Head of caudate nucleus (tissue), 42 donors: ENCODE measurements at regions of chr17 and their contacts with region 1.

Region 1: GRCh38 chr17:76408052-76408849 is 23.8 kb downstream of the SPHK1 start:
- DNase-seq: peak in 38 of 42 donors; percentile 29 to 83 (median 66)

Region 2: GRCh38 chr17:76452660-76453430 is 44.6 kb after region 1 on chr17 and contains the start of gene UBE2O:
- intact Hi-C with region 1: loop called (anchors 10 kb)
- DNase-seq: peak; percentile 68 to 96 (median 92)

Region 3: DNA sequence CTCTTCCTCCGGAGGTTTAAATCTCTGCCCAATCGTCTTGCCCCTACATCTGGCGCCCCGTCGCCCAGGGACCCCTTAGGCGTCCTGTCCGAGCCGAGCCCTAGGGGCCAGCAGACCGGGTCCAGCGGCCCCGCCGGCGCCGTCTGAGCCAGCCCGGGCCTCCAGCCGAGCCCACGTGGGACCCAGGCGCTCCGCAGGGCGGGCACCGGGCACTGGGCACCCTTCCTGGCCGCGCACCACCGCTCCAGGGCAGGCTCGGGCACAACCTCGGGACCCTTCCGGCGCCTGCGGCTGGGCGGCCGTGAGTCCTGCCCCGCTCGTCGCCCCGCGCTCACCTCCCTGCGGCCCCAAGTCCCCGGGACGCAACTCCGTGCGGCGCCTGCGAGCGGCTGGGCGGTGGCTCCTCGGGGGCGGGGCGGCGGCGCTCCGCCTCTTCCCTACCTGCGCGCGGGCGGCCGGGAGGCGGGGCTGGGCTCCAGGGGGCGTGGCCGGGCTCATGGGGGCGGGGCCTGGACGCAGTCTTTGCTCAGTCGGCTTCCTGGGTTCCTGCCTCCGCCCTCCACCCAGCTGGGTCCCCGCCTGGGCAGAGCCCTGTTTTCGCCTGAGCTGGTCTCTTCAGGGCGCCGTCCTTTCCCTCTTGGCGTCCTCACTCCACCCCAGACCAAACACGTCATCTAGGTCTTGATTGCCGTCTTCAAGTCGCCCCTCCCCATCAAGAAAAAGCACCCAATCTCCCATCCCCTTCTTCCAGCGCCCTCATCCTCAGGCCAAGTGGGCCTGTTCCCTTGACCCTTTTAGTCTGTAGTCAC is 93.0 kb after region 1 on chr17 and contains the start of gene RHBDF2:
- intact Hi-C with region 1: loop called (anchors 10 kb)
- DNase-seq: peak; percentile 68 to 90 (median 84)